AG04450 (cell line): ENCODE measurements at regions of chr15 and their contacts with region 1.

Region 1: GRCh38 chr15:64355944-64356709 is at the start of gene CSNK1G1:
- DNase-seq: peak; percentile 95
- H3K4me3 ChIP-seq: peak within 1 kb of the TSS; percentile 98
- H3K27ac ChIP-seq: peak within 1 kb of the TSS; percentile 70
- H3K27me3 ChIP-seq: no peaks in the 10 kb centered on the region
- CTCF ChIP-seq: peak; percentile 61
- polyA plus RNA-seq, gene CSNK1G1: 19.0 and 24.3 TPM in 2 replicates

Region 2: DNA sequence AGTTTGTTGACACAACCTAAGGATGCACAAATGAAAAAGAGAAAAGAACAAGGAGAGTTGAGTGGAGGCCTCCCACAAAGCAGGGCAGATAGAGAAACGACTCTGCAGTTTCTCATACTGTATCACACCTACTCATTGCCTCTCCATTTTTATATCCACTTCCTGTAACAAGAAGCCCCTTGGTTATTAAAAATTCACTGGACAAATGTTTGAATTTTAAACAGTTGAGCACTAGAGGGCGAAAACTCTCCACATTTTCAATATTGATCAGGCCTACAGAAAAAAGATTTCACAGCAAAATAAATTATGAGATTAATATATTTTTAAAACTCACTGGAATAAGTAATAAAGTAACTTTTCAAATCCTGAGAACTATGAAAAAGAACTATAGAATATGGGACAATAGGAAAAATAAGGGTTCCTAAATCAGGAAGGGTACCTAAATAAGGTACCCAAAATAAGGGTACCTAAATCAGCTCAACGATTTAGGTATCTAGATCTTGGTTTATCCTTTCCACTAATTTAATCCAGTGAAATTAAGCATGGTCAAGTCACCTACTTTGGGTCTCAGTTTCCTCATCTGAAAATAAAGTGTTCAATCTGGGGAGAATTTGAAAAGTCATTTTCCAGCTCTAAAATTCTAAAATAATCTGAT is 146.3 kb before region 1 on chr15:
- CTCF ChIA-PET with region 1: interaction called, 12 read pairs
- POLR2A ChIA-PET with region 1: no interaction called
- DNase-seq: peak; percentile 2
- H3K4me3 ChIP-seq: no peak overlapping the region
- H3K27ac ChIP-seq: no peak overlapping the region
- H3K27me3 ChIP-seq: no peaks in the 10 kb centered on the region
- CTCF ChIP-seq: peak; percentile 56

Region 3: DNA sequence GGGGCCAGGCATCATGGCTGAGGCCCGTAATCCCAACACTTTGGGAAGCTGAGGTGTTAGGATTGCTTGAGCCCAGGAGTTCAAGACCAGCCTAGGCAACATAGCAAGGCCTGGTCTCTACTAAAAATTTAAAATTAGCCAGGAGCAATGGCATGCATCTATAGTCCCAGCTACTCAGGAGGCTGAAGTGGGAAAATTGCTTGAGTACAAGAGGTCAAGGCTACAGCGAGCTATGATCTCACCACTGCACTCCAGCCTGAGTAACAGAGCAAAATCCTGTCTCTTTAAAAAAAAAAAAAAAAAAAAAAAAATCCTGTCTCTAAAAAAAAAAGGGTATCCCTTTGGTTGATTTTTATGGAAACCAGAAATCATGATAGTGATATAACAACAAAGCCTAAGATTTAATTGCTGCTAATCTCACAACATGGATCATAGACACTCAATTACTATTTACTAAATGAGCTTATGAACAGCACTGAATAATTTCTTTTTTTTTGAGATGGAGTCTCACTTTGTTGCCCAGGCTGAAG is 13.0 kb after region 1 on chr15:
- CTCF ChIA-PET with region 1: no interaction called
- POLR2A ChIA-PET with region 1: interaction called, 10 read pairs
- DNase-seq: no peak
- H3K4me3 ChIP-seq: no peak overlapping the region
- H3K27ac ChIP-seq: no peak overlapping the region
- H3K27me3 ChIP-seq: no peaks in the 10 kb centered on the region
- CTCF ChIP-seq: no peak

Region 4: DNA sequence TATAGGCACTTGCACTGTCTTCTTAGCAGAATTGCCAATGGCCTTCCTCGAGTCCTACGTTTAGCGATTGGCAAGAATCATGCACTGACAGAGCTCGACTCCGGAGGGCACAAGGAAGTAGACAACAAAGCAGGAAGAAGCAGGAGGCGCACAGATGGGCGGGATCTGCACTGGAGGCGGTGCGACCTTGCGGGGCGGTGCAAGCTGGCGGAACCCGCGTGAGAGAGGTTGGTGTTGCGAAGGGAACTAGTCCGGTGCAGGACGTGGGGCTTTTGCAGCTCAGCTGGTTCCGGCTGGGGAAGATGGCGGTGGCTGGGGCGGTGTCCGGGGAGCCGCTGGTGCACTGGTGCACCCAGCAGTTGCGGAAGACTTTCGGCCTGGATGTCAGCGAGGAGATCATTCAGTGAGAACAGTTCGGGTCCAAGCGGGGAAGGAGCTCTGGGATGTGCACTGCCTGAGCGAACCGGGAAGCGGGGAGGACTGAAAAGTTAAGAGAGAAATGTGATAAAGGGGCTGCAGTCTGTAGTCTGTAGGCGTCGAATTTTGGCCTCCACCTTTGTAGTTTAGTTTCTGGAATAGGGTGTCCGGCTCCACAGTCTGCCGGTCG is 31.5 kb after region 1 on chr15 and contains the start of gene TRIP4:
- CTCF ChIA-PET with region 1: no interaction called
- POLR2A ChIA-PET with region 1: interaction called, 10 read pairs
- DNase-seq: peak; percentile 94
- H3K4me3 ChIP-seq: peak within 1 kb of the TSS; percentile 73
- H3K27ac ChIP-seq: peak within 1 kb of the TSS; percentile 73
- H3K27me3 ChIP-seq: no peaks in the 10 kb centered on the region
- CTCF ChIP-seq: 0 out of 2 replicates have a peak, but pooled peaks have one; percentile 11
- polyA plus RNA-seq, gene TRIP4: 26.5 and 28.0 TPM in 2 replicates